ENCODE measurements at regions of chr9 and their contacts with region 1.

Region 1: GRCh38 chr9:77588271-77588937 is 59.7 kb downstream of the GNA14 start:
- DNase-seq: peak; percentile 31 to 89
- H3K4me3 ChIP-seq: peak overlapping the region; percentile 45; the same call in 1 of the 2 replicates
- H3K27ac ChIP-seq: peak overlapping the region; percentile 96
- H3K4me1 ChIP-seq: peaks cover 50% of the 10 kb centered on the region
- H3K27me3 ChIP-seq: no peaks in the 10 kb centered on the region
- CTCF ChIP-seq: no peak

Region 2: DNA sequence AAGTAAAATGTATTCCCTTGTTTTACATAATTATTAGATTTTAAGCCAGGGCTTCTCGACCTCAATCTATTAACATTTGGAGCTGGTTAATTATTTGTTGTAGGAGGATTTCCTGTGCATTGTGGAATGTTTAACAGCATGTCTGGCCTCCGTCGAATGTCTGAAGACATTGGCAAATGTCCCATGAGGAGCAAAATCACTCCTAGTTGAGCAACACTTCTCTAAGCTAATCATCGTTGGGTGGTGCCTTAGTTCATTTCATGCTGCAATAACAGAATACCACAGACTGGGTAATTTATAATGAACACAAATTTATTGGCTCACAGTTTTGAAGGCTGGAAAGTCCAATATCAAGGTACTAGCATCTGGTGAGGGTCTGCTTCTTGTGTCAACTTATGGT is 424.5 kb before region 1 on chr9:
- CTCF ChIA-PET with region 1: no interaction called
- POLR2A ChIA-PET with region 1: no interaction called
- intact Hi-C with region 1: no loop called
- DNase-seq: no peak
- H3K4me3 ChIP-seq: no peak overlapping the region
- H3K27ac ChIP-seq: no peak overlapping the region
- H3K4me1 ChIP-seq: no peaks in the 10 kb centered on the region
- H3K27me3 ChIP-seq: no peaks in the 10 kb centered on the region
- CTCF ChIP-seq: no peak

Region 3: GRCh38 chr9:77177161-77177893 is 411.1 kb before region 1 on chr9 and contains the start of gene VPS13A:
- CTCF ChIA-PET with region 1: no interaction called
- POLR2A ChIA-PET with region 1: no interaction called
- intact Hi-C with region 1: loop called (anchors 1 kb)
- DNase-seq: peak; percentile 84 to 97
- H3K4me3 ChIP-seq: peak within 1 kb of the TSS; percentile 76
- H3K27ac ChIP-seq: peak within 1 kb of the TSS; percentile 44
- H3K4me1 ChIP-seq: peaks cover 31% of the 10 kb centered on the region
- H3K27me3 ChIP-seq: no peaks in the 10 kb centered on the region
- CTCF ChIP-seq: no peak; the same call in 1 of the 2 replicates
- total RNA-seq, gene VPS13A: 37.4 and 53.9 TPM in 2 replicates

Region 4: GRCh38 chr9:77601476-77602099 is 13.2 kb after region 1 on chr9:
- CTCF ChIA-PET with region 1: no interaction called
- POLR2A ChIA-PET with region 1: no interaction called
- intact Hi-C with region 1: no loop called
- DNase-seq: no peak
- H3K4me3 ChIP-seq: no peak overlapping the region
- H3K27ac ChIP-seq: no peak overlapping the region
- H3K4me1 ChIP-seq: no peaks in the 10 kb centered on the region
- H3K27me3 ChIP-seq: no peaks in the 10 kb centered on the region
- CTCF ChIP-seq: no peak

Region 5: DNA sequence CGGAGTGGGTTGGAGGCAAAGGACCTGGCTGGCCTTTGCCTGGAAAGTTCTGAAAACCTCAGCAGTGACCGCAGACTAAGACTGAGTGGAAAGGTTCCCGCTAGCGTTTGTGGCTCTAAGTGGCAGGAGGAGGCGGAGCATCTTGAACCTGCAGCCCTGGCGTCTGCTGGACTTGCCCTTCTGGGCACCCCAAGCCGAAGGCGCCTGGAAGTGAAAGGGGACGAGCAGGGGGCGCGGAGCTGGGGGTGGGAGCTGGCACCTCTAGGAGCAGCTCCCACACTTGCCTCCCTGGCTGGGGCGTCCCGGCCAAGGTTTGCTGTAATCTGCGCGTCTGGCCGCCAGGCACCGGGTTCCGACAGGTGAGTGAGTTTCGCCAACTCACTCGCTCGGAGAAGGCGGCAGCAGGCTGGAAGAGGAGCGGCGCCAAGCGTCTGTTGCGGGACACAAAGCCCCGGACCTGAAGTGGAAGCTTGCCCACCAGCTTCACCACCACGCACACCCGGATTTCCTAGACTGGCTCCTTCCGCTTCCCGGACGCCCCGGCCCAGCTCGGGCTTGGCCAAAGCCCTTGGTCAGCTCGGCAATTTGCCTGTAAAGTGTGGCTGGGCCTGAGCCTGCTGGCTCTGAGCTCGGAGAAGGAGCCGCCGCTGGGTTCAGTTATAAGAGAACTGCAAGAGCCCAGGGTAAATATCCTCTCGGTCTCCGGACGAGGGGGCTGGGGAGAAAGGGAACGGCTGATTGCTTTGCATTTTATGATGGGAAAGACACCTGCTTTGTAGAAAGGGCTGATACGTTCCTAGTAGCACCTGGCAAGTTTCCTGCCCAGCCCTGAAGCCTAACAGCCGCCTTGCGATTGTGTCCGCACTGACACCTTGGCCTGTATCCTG is 60.1 kb after region 1 on chr9 and contains the start of gene GNA14:
- CTCF ChIA-PET with region 1: no interaction called
- POLR2A ChIA-PET with region 1: interaction called, 6 read pairs
- intact Hi-C with region 1: loop called (anchors 2 kb)
- DNase-seq: peak in 1 of 2 experiments; percentile 70
- H3K4me3 ChIP-seq: no peak within 1 kb of the TSS
- H3K27ac ChIP-seq: no peak within 1 kb of the TSS
- H3K4me1 ChIP-seq: no peaks in the 10 kb centered on the region
- H3K27me3 ChIP-seq: no peaks in the 10 kb centered on the region
- CTCF ChIP-seq: no peak
- total RNA-seq, gene GNA14: 1.1 and 1.3 TPM in 2 replicates

Region 6: GRCh38 chr9:77712533-77713130 is 124.2 kb after region 1 on chr9:
- CTCF ChIA-PET with region 1: no interaction called
- POLR2A ChIA-PET with region 1: no interaction called
- intact Hi-C with region 1: loop called (anchors 2 kb)
- DNase-seq: peak; percentile 45 to 76
- H3K4me3 ChIP-seq: no peak overlapping the region
- H3K27ac ChIP-seq: no peak overlapping the region
- H3K4me1 ChIP-seq: peaks cover 43% of the 10 kb centered on the region
- H3K27me3 ChIP-seq: no peaks in the 10 kb centered on the region
- CTCF ChIP-seq: no peak

Measured in PC-9 (cell line).